Gastrocnemius medialis (tissue), 4 donors: ENCODE measurements at regions of chr16 and their contacts with region 1.

Region 1: DNA sequence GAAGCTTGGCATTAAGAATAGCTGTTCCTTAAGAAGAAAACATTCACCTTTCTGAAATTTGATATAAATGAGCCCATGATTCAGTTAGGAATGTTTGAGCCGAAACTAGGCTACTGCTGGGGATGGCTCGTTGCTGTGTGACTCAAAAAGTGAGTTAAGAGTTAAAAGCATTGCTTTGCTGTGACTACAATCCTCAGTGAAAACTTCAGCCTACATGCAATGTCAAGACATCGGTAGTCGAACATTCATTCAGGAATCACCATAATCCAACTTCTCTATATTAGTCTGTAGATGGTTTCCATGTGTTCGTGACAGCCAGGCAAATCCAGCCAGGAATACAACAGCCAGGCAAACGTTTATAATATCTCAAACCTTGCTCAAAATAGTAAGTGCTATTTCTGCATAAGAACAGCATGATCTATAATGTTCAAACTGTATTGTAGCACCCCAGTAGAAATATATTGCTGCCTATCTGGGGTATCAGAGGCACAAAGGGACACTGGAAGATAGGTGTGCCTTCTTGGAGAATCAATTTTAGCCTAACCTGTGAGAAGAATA is 1225.1 kb downstream of the CDH8 start:
- DNase-seq: no peak
- ATAC-seq: no peak
- H3K4me3 ChIP-seq: no peak overlapping the region
- H3K27ac ChIP-seq: no peak overlapping the region
- H3K4me1 ChIP-seq: no peaks in the 10 kb centered on the region
- H3K27me3 ChIP-seq: no peaks in the 10 kb centered on the region
- CTCF ChIP-seq: no peak
- POLR2A ChIP-seq: no peak

Region 2: DNA sequence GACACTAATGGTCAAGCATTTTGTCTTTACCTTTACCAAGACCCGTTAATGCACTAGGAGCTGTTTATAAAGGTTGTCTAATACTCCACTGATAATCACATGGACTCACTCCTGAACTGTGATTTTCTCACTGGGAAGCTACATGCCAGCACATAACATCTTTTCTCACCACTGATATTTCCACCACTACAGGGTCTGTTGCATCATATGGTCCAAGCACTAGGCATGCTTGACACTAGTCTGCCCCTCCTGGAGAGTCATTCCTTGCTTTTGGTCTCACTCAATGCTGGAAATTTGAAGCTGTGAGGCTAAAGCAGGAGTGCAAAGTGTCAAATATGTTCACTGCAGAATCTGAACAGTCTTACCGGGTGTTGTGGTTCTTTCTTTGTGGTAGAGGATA is 351.7 kb before region 1 on chr16:
- in situ Hi-C with region 1: no loop called
- intact Hi-C with region 1: no loop called
- DNase-seq: no peak
- ATAC-seq: no peak
- H3K4me3 ChIP-seq: no peak overlapping the region
- H3K27ac ChIP-seq: no peak overlapping the region
- H3K4me1 ChIP-seq: no peaks in the 10 kb centered on the region
- H3K27me3 ChIP-seq: no peaks in the 10 kb centered on the region
- CTCF ChIP-seq: no peak
- POLR2A ChIP-seq: no peak

Region 3: DNA sequence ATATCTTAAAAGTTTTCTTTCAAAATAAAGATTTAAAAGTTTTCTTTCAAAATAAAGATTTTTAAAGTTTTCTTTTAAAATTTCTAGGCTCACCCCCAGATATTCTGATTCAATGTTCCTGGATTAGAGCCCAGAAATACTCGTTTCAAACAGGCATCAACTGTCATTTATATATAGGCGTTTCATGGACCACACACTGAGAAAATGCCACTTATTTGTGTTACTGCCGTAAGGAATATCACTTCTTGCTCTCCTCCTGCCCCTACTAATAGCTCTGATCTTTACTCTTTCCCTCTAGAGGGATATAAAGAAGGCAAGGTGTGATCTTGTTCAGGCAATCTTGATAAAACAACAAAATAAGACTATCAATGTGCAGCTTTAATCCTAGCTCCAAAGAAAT is 99.0 kb before region 1 on chr16:
- in situ Hi-C with region 1: loop called in 1 of 4 experiments (anchors 25 kb)
- intact Hi-C with region 1: no loop called
- DNase-seq: no peak
- ATAC-seq: no peak
- H3K4me3 ChIP-seq: no peak overlapping the region
- H3K27ac ChIP-seq: no peak overlapping the region
- H3K4me1 ChIP-seq: no peaks in the 10 kb centered on the region
- H3K27me3 ChIP-seq: no peaks in the 10 kb centered on the region
- CTCF ChIP-seq: no peak
- POLR2A ChIP-seq: no peak